Activated CD4-positive, alpha-beta memory T cell treated with anti-CD3 and anti-CD28 coated beads for 36 hours (primary cell): ENCODE measurements at regions of chr21 and their contacts with region 1.

Region 1: GRCh38 chr21:43938751-43939442 is 73.2 kb upstream of the TRAPPC10 start:
- DNase-seq: peak; percentile 93
- H3K4me3 Mint-ChIP-seq: peak overlapping the region; percentile 81
- H3K27ac Mint-ChIP-seq: peak overlapping the region; percentile 31
- H3K4me1 Mint-ChIP-seq: peaks cover 19% of the 10 kb centered on the region
- H3K27me3 Mint-ChIP-seq: no peaks in the 10 kb centered on the region

Region 2: GRCh38 chr21:43789276-43790009 is 149.5 kb before region 1 on chr21 and contains the start of gene RRP1:
- CTCF ChIA-PET with region 1: interaction called, 5 read pairs
- POLR2A ChIA-PET with region 1: no interaction called
- intact Hi-C with region 1: loop called (anchors 10 kb)
- DNase-seq: peak; percentile 94
- H3K4me3 Mint-ChIP-seq: peak within 1 kb of the TSS; percentile 97
- H3K27ac Mint-ChIP-seq: peak within 1 kb of the TSS; percentile 84
- H3K4me1 Mint-ChIP-seq: peaks cover 24% of the 10 kb centered on the region
- H3K27me3 Mint-ChIP-seq: no peaks in the 10 kb centered on the region
- total RNA-seq, gene RRP1: 42.7 to 47.8 TPM

Region 3: DNA sequence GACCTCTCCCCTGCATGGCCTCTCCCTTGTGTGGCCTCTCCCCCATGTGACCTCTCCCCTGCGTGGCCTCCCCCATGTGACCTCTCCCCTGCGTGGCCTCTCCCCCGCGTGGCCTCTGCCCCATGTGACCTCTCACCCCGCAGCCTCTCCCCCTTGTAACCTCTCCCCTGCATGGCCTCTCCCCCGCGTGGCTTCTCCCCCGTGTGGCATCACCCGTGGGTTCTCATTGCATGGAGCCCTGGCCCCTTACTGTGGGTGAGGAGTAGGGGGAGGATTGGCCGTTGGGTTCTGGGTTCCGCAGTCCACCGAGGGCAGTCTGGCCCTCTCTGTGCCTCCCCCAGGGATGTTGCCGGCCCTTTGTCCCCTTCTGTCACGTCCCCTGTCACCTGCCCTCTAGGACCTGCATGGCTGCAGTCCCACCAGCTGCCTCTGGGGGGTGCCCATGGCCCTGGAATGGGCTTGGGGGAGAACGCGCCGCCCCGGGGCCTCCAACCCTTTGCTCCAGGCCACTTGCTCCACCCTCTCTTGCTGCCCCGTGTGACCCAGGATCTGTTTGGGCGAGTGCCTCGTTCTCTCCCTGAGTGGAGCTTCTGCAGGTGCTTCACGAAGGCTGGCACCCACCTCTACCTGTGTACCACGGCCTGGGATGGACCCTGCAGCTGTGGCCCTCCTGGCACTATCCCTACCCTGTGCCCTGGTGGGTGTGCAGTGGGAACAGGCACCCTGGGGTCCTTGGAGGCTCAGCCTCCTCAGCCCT is 128.2 kb before region 1 on chr21:
- CTCF ChIA-PET with region 1: interaction called, 22 read pairs
- POLR2A ChIA-PET with region 1: no interaction called
- intact Hi-C with region 1: loop called (anchors 1 kb)
- DNase-seq: peak; percentile 93
- H3K4me3 Mint-ChIP-seq: no peak overlapping the region
- H3K27ac Mint-ChIP-seq: no peak overlapping the region
- H3K4me1 Mint-ChIP-seq: peaks cover 7% of the 10 kb centered on the region
- H3K27me3 Mint-ChIP-seq: no peaks in the 10 kb centered on the region

Region 4: DNA sequence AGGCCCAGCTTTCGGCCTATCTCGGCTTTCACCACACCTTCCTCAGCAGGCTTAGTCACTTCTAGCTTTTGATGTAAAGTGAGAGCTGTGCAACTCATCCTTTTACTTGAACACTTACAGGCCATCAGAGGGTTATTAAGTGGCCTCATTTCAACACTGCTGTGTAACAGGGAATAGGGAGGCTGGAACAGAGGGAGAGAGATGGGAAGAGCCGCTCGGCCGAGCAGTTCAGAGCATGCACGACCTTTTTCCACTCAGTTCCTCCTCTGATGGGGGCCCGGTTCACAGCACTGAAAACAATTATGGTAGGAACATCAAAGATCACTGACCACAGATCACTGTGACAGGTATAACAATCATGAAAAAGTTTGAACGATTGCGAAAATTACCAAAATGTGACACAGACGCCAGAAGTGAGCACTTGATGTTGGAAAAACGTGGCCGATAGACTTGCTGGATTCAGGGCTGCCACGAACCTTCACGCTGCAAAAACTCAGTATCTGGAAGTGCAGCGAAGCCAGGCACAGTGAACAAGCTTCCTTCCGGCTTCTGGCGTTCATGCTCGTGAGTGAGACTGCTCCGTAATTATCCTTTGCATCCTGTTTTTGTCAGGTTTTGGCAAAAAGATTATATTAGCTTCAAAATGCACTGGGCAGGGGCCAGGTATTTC is 45.2 kb before region 1 on chr21:
- CTCF ChIA-PET with region 1: interaction called, 3 read pairs
- POLR2A ChIA-PET with region 1: no interaction called
- intact Hi-C with region 1: loop called (anchors 1 kb)
- DNase-seq: peak; percentile 73
- H3K4me3 Mint-ChIP-seq: peak overlapping the region; percentile 42
- H3K27ac Mint-ChIP-seq: peak overlapping the region; percentile 71
- H3K4me1 Mint-ChIP-seq: peaks cover 50% of the 10 kb centered on the region
- H3K27me3 Mint-ChIP-seq: no peaks in the 10 kb centered on the region

Region 5: GRCh38 chr21:43916691-43917514 is 22.0 kb before region 1 on chr21:
- CTCF ChIA-PET with region 1: interaction called, 10 read pairs
- POLR2A ChIA-PET with region 1: no interaction called
- intact Hi-C with region 1: no loop called
- DNase-seq: peak; percentile 76
- H3K4me3 Mint-ChIP-seq: peak overlapping the region; percentile 68
- H3K27ac Mint-ChIP-seq: peak overlapping the region; percentile 76
- H3K4me1 Mint-ChIP-seq: peaks cover 52% of the 10 kb centered on the region
- H3K27me3 Mint-ChIP-seq: no peaks in the 10 kb centered on the region